SK-N-SH (cell line): ENCODE measurements at regions of chr5 and their contacts with region 1.

Region 1: GRCh38 chr5:138967791-138968448 is 92.8 kb upstream of the LRRTM2 start:
- DNase-seq: no peak
- H3K4me3 ChIP-seq: no peak overlapping the region
- H3K27ac ChIP-seq: peak overlapping the region in 1 of 2 experiments; percentile 98; a peak in 2 of 4 replicates
- H3K4me1 ChIP-seq: peaks cover 7 to 72% of the 10 kb centered on the region in 2 experiments; a peak in 3 of 4 replicates
- H3K27me3 ChIP-seq: no peaks in the 10 kb centered on the region
- CTCF ChIP-seq: no peak
- EP300 ChIP-seq: no peak
- RAD21 ChIP-seq: no peak

Region 2: GRCh38 chr5:138953387-138954256 is 14.3 kb before region 1 on chr5:
- CTCF ChIA-PET with region 1: interaction called, 11 read pairs
- POLR2A ChIA-PET with region 1: interaction called, 9 read pairs
- DNase-seq: peak; percentile 90
- H3K4me3 ChIP-seq: no peak overlapping the region; a peak in 1 of 4 replicates
- H3K27ac ChIP-seq: peak overlapping the region in 1 of 2 experiments; percentile 98; a peak in 2 of 4 replicates
- H3K4me1 ChIP-seq: peaks cover 16 to 75% of the 10 kb centered on the region in 2 experiments; a peak in 3 of 4 replicates
- H3K27me3 ChIP-seq: no peaks in the 10 kb centered on the region
- CTCF ChIP-seq: no peak
- EP300 ChIP-seq: peak in 1 of 2 experiments; percentile 60; a peak in 1 of 4 replicates
- RAD21 ChIP-seq: peak; percentile 6; the same call in 1 of the 2 replicates